ENCODE measurements at regions of chr3 and their contacts with region 1.

Region 1: DNA sequence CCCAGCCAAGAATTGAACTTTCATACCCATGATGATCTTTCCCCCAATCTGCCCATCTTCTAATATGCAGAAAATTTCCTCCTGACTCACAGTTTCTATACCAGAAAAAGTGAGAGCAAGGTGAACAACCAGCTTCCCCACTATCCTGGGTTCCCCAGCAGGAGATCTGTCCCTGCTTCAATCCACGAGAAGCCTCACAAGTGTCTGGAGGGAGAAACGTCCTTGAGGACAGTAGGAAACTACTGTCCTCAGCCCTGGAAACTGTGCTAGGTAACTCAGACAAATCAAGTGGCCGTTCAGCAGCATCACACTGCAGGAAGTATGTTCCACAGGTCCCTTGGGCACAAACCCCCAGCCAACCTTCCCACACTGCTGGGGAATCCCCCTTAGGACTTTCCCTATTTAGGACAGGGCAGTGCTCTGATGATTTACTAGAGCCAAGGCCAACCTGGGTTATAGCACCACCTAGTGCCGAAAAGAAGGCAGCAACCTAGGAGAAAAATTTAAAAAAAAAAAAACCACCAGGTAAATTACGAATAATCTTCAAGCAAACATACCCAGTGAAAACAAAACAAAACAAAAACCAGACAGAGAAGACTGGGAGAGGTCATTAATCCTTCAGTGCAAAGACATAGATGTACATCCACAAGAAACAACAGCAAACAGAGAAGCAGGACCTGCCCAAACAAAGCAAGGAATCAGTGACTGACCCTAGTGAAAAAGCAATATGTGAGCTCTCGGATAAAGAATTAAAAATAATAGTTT is 36.0 kb downstream of the MORC1 start:
- DNase-seq: peak; percentile 43
- H3K4me3 Mint-ChIP-seq: no peak overlapping the region
- H3K27ac Mint-ChIP-seq: no peak overlapping the region
- H3K4me1 Mint-ChIP-seq: peaks cover 5% of the 10 kb centered on the region
- H3K27me3 Mint-ChIP-seq: peaks cover 12% of the 10 kb centered on the region

Region 2: DNA sequence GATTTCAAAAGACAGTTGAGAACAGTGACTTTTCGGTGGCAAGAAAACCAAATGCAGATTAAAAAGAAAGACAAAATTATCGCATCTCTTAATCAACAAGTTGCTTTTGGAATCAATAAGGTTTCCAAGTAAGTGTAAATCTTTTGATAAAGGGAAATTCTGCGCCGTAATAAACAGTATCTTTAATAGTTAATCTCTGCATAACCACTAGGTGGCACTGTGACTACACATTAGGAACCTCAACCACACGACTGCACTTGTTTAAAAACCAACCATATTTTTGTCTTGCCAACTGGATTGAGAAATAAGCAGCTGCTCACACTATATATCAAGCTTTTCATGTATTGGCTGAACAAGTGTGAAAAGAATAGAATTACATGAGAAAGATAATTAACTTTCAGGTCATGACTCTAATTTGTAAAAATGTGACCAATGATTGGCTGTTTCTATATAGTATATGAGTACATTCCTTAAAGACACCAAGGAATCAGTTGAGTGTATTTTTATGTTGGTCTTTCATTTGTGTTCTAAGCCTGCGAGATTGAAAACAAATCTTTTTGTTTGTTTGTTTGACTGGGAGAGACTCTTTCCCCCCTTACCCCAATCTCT is 419.7 kb before region 1 on chr3:
- CTCF ChIA-PET with region 1: interaction called, 5 read pairs
- POLR2A ChIA-PET with region 1: no interaction called
- intact Hi-C with region 1: loop called (anchors 5 kb)
- DNase-seq: peak; percentile 40
- H3K4me3 Mint-ChIP-seq: no peak overlapping the region
- H3K27ac Mint-ChIP-seq: no peak overlapping the region
- H3K4me1 Mint-ChIP-seq: peaks cover 11% of the 10 kb centered on the region
- H3K27me3 Mint-ChIP-seq: no peaks in the 10 kb centered on the region

Measured in activated CD4-positive, alpha-beta memory T cell treated with anti-CD3 and anti-CD28 coated beads for 36 hours (primary cell).